ENCODE measurements at regions of chr13 and their contacts with region 1.

Region 1: GRCh38 chr13:39655569-39656324 is at the start of gene COG6:
- DNase-seq: peak; percentile 96
- ATAC-seq: peak; percentile 90
- H3K4me3 ChIP-seq: peak within 1 kb of the TSS; percentile 59 to 93 (median 89)
- H3K4me3 Mint-ChIP-seq: peak within 1 kb of the TSS; percentile 100
- H3K27ac ChIP-seq: peak within 1 kb of the TSS; percentile 35 to 57
- H3K27ac Mint-ChIP-seq: peak within 1 kb of the TSS; percentile 96
- H3K4me1 ChIP-seq: peaks cover 10% of the 10 kb centered on the region in 2 donors
- H3K4me1 Mint-ChIP-seq: peaks cover 32% of the 10 kb centered on the region
- H3K27me3 ChIP-seq: no peaks in the 10 kb centered on the region
- H3K27me3 Mint-ChIP-seq: peaks cover 3% of the 10 kb centered on the region
- CTCF ChIP-seq: no peak
- total RNA-seq, gene COG6: 49.9 and 55.1 TPM in 2 replicates

Region 2: GRCh38 chr13:38349390-38350113 is 1306.2 kb before region 1 on chr13 and contains the start of gene UFM1:
- CTCF ChIA-PET with region 1: no interaction called
- POLR2A ChIA-PET with region 1: no interaction called
- intact Hi-C with region 1: loop called (anchors 2 kb)
- DNase-seq: peak; percentile 95
- ATAC-seq: peak; percentile 96
- H3K4me3 ChIP-seq: peak within 1 kb of the TSS; percentile 74 to 98 (median 92)
- H3K4me3 Mint-ChIP-seq: peak within 1 kb of the TSS; percentile 99
- H3K27ac ChIP-seq: peak within 1 kb of the TSS; percentile 92 to 93
- H3K27ac Mint-ChIP-seq: peak within 1 kb of the TSS; percentile 98
- H3K4me1 ChIP-seq: peaks cover 21 to 22% of the 10 kb centered on the region in 2 donors
- H3K4me1 Mint-ChIP-seq: peaks cover 38% of the 10 kb centered on the region
- H3K27me3 ChIP-seq: no peaks in the 10 kb centered on the region
- H3K27me3 Mint-ChIP-seq: no peaks in the 10 kb centered on the region
- CTCF ChIP-seq: no peak
- total RNA-seq, gene UFM1: 61.6 and 66.4 TPM in 2 replicates

Region 3: DNA sequence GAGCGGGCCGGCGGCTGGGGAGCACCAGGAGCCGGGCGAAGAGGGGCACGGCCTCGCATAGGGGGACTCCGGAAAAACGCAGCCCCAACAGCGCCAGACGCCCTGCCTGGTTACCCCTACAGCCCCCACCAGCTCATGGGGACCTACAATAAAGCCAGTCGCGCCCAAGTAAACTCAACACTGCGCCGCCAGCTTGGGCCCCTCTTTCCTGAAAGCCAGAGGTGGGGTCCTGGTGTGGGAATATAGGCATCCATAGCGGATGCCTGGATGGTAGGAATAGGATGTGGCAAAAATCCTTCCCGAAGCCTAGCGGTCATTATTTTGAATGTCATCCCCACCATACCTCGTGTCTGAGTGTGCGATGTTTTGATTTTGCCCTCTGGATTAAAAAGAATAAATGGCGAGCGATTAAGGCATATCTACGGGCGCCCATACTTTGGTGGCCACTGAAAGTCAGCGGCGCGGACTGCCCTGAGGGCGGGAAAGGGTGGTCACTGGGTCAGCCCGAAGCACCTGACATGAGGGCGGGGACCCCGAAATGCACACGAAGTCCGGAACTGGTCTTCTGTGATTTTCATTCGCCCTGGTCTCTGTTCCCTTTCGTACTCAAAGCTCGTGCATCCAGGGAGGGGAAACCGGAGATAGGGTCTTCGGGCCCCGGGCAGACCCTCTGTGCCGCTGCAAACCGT is 617.7 kb before region 1 on chr13 and contains the starts of genes NHLRC3 and PROSER1:
- CTCF ChIA-PET with region 1: no interaction called
- POLR2A ChIA-PET with region 1: no interaction called
- intact Hi-C with region 1: loop called (anchors 1 kb)
- DNase-seq: peak; percentile 92
- ATAC-seq: peak; percentile 84
- H3K4me3 ChIP-seq: peak within 1 kb of the TSS; percentile 67 to 99 (median 90)
- H3K4me3 Mint-ChIP-seq: peak within 1 kb of the TSS; percentile 92
- H3K27ac ChIP-seq: peak within 1 kb of the TSS; percentile 81 to 95
- H3K27ac Mint-ChIP-seq: peak within 1 kb of the TSS; percentile 100
- H3K4me1 ChIP-seq: peaks cover 30 to 35% of the 10 kb centered on the region in 2 donors
- H3K4me1 Mint-ChIP-seq: peaks cover 55% of the 10 kb centered on the region
- H3K27me3 ChIP-seq: no peaks in the 10 kb centered on the region
- H3K27me3 Mint-ChIP-seq: no peaks in the 10 kb centered on the region
- CTCF ChIP-seq: no peak
- total RNA-seq, gene NHLRC3: 38.8 and 41.9 TPM in 2 replicates
- total RNA-seq, gene PROSER1: 63.5 and 64.0 TPM in 2 replicates

Region 4: DNA sequence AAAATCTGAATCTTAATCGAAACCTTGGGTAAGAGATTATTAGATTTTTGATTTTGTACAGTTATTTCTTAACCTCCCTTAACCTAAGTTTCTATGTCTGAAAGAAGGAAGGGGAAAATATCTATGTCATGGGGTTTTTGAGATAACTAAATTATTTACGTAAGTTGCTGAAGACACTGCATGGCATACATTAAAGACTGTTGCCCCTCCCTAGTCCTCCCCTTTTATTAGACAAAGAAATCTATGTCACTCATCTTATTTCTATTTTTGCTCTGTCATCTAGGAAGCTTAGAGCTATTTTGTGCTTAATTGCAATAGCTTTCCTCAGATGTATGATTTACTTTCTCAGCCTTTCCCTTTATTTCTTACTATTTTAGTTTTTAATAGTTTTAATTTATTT is 14.7 kb after region 1 on chr13:
- CTCF ChIA-PET with region 1: interaction called, 4 read pairs
- POLR2A ChIA-PET with region 1: no interaction called
- intact Hi-C with region 1: loop called (anchors 2 kb)
- DNase-seq: no peak
- ATAC-seq: no peak
- H3K4me3 ChIP-seq: no peak overlapping the region
- H3K4me3 Mint-ChIP-seq: no peak overlapping the region
- H3K27ac ChIP-seq: no peak overlapping the region
- H3K27ac Mint-ChIP-seq: no peak overlapping the region
- H3K4me1 ChIP-seq: no peaks in the 10 kb centered on the region
- H3K4me1 Mint-ChIP-seq: peaks cover 9% of the 10 kb centered on the region
- H3K27me3 ChIP-seq: no peaks in the 10 kb centered on the region
- H3K27me3 Mint-ChIP-seq: no peaks in the 10 kb centered on the region
- CTCF ChIP-seq: no peak

Region 5: GRCh38 chr13:39684531-39685137 is 28.9 kb after region 1 on chr13:
- CTCF ChIA-PET with region 1: interaction called, 10 read pairs
- POLR2A ChIA-PET with region 1: no interaction called
- intact Hi-C with region 1: no loop called
- DNase-seq: peak; percentile 47
- ATAC-seq: no peak
- H3K4me3 ChIP-seq: no peak overlapping the region
- H3K4me3 Mint-ChIP-seq: no peak overlapping the region
- H3K27ac ChIP-seq: no peak overlapping the region
- H3K27ac Mint-ChIP-seq: no peak overlapping the region
- H3K4me1 ChIP-seq: peaks cover 0 to 7% of the 10 kb centered on the region in 2 donors
- H3K4me1 Mint-ChIP-seq: peaks cover 13% of the 10 kb centered on the region
- H3K27me3 ChIP-seq: no peaks in the 10 kb centered on the region
- H3K27me3 Mint-ChIP-seq: no peaks in the 10 kb centered on the region
- CTCF ChIP-seq: peak; percentile 77

Region 6: DNA sequence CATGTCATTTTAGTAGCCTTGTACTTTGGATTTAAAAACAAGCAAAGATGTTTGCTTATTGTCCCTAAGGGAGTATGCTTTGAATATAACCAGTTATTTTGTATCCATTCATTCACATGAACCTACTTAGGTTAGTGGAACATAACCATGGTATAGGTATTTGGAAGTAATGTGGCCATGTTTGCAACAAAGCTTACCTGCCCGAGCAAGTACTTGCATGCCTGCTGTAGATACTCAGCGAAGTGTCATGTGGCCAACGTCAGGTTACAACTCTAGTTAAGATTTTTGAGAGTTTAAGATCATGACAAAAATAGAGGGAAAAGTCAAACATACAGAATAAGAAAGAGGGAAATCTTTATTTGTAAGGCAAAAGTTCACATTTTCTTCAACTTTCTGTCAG is 56.9 kb after region 1 on chr13:
- CTCF ChIA-PET with region 1: no interaction called
- POLR2A ChIA-PET with region 1: no interaction called
- intact Hi-C with region 1: no loop called
- DNase-seq: no peak
- ATAC-seq: no peak
- H3K4me3 ChIP-seq: no peak overlapping the region
- H3K4me3 Mint-ChIP-seq: no peak overlapping the region
- H3K27ac ChIP-seq: no peak overlapping the region
- H3K27ac Mint-ChIP-seq: no peak overlapping the region
- H3K4me1 ChIP-seq: no peaks in the 10 kb centered on the region
- H3K4me1 Mint-ChIP-seq: no peaks in the 10 kb centered on the region
- H3K27me3 ChIP-seq: no peaks in the 10 kb centered on the region
- H3K27me3 Mint-ChIP-seq: no peaks in the 10 kb centered on the region
- CTCF ChIP-seq: no peak

Region 7: DNA sequence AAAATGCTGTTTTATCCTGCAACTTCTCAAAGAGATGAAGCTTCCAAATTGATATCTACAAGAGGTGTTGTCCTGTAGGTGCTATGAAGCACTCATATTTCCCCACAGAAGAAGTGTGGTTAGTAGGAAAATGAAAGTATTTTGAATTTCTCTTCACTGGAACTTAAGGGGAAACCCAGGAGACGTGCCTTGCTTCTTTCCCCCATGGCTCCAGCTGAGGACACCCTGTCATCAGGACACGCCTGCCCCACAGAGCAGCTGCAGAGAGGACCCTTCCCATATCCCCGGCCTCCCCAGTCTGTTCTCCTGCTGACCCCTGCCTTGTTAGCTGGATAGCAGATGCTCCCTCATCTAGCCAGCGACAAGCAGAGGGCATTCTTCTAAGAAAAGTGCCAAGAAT is 371.0 kb after region 1 on chr13:
- CTCF ChIA-PET with region 1: no interaction called
- POLR2A ChIA-PET with region 1: no interaction called
- intact Hi-C with region 1: no loop called
- DNase-seq: no peak
- ATAC-seq: no peak
- H3K4me3 ChIP-seq: no peak overlapping the region
- H3K4me3 Mint-ChIP-seq: peak overlapping the region; percentile 33
- H3K27ac ChIP-seq: no peak overlapping the region
- H3K27ac Mint-ChIP-seq: no peak overlapping the region
- H3K4me1 ChIP-seq: peaks cover 17% of the 10 kb centered on the region in 2 donors
- H3K4me1 Mint-ChIP-seq: peaks cover 12% of the 10 kb centered on the region
- H3K27me3 ChIP-seq: peaks cover 0 to 4% (median 0%) of the 10 kb centered on the region in 4 experiments
- H3K27me3 Mint-ChIP-seq: peaks cover 6% of the 10 kb centered on the region
- CTCF ChIP-seq: no peak

Region 8: DNA sequence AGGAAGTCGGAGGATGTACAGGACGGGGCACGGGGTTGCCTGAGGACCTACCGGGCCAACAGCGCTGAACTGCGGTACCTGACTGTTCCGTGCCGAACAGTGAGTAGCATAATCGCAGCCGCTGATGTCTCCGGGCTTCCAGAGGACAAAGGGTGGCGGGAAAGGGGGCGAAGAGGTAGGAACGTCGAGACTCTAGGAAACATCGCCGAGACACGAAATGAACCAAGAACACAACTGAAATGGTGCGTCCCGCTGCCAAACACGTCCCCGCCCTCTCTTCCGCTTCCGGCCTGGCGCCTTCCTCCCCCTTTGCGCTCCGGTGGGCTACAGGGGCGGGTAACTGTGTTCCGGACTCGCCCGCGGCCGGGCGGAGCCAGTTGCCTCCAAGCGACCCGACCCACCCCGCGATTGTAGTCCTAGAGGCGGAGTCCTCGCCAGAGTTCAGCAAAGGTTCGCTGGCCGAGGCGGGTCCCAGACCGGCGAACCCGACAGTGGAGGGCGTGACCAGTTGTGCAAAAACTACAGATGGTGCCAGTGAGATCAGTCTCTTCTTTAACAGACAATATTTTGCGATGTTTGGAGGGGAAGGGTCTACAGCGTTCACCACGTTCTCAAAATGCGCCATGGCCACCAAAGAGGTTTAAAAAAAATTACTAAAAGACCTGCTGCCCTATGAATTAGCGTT is 1115.3 kb after region 1 on chr13 and contains the start of gene MRPS31:
- CTCF ChIA-PET with region 1: no interaction called
- POLR2A ChIA-PET with region 1: no interaction called
- intact Hi-C with region 1: loop called (anchors 1 kb)
- DNase-seq: peak; percentile 95
- ATAC-seq: peak; percentile 100
- H3K4me3 ChIP-seq: peak within 1 kb of the TSS; percentile 65 to 99 (median 99)
- H3K4me3 Mint-ChIP-seq: peak within 1 kb of the TSS; percentile 100
- H3K27ac ChIP-seq: peak within 1 kb of the TSS; percentile 64 to 88
- H3K27ac Mint-ChIP-seq: peak within 1 kb of the TSS; percentile 97
- H3K4me1 ChIP-seq: peaks cover 12 to 19% of the 10 kb centered on the region in 2 donors
- H3K4me1 Mint-ChIP-seq: peaks cover 21% of the 10 kb centered on the region
- H3K27me3 ChIP-seq: no peaks in the 10 kb centered on the region
- H3K27me3 Mint-ChIP-seq: no peaks in the 10 kb centered on the region
- CTCF ChIP-seq: no peak
- total RNA-seq, gene MRPS31: 29.7 and 34.4 TPM in 2 replicates